ENCODE measurements at regions of chr5 and their contacts with region 1.

Region 1: DNA sequence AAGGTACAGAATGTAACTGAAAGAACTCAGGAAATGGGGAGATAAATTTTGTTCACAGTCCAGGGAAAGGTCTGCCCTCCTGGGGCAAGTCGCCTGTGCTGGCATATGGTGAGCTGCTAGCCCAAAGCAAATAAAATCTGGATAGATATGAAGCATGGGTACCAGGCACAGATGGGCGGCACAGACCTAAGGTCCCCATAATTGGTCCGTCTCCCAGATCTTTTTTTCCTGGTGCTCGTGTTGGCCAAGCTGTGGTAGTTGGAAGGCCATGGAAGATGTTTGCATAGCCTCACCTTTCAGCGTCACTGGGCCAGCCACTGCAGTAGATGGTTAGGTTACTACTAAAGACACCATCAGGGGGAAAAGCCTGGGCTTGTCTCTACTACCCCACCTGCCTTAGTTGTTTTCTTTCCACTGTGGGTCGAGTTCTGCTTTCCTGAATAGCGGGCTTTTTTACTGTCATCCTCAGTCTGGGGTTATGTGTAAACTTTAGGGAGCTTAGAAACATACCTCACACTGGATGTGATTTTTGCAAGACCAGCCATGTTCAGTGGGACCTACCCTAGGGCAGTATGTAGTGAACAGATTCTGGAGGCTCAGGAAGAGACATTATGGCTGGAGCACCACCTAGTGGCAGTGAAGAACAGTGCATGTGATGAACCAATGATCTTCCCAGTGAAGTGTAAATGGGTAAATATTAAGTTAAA is 24.2 kb upstream of the GLRX start:
- DNase-seq: peak; percentile 90
- H3K4me3 Mint-ChIP-seq: no peak overlapping the region
- H3K27ac Mint-ChIP-seq: no peak overlapping the region
- H3K4me1 Mint-ChIP-seq: peaks cover 27% of the 10 kb centered on the region
- H3K27me3 Mint-ChIP-seq: peaks cover 16% of the 10 kb centered on the region

Region 2: DNA sequence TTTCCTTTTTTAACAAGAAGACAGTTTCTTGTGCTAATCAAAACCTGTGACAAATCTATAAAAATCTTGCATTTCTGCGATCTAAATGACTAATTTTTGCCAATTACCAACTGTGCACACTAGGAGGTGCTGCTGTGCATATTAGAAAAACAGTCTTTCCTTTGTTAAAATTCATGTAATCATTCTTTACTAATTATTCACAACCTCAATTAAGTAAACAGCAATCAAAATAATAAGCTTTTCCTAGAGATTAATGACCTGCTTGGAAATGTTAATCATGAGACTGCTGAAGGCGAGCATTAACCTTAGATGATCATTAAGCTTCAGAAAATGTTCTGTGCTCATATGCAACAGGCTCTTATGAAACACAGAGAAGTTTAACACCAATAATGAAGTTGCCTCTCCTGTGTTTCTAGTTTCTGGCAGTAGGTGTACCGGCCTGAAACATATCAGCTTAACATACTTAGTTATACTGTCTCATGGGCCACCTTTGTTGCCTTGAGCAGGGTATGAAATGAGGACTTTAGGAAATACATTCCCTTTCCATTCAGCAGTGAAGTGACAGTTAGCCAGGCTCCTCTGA is 182.4 kb before region 1 on chr5:
- intact Hi-C with region 1: loop called (anchors 1 kb)
- DNase-seq: peak; percentile 78
- H3K4me3 Mint-ChIP-seq: no peak overlapping the region
- H3K27ac Mint-ChIP-seq: no peak overlapping the region
- H3K4me1 Mint-ChIP-seq: peaks cover 2% of the 10 kb centered on the region
- H3K27me3 Mint-ChIP-seq: peaks cover 13% of the 10 kb centered on the region

Region 3: DNA sequence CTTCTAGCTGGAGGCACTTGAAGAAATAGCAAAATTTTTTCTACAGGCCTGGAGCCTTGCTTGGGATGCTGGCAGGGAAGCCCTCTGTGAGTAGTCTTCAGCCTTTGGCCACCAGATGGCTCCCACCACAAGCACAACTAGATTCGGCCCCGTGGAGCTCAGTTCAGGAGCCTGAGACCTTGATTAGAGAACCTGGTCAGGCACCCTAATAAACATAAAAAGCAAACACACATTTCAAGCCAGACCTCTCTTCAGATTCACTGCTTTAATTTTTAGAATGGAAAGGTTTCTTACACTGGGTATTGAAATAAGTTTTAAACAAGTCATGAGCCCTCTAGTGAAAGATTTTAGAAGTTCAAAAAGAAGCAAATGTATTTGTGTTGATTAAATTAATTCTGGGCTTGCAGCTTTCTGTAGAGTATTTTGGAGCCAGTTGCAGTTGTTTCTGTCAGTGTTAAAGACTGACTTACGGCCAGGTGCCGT is 65.6 kb before region 1 on chr5:
- intact Hi-C with region 1: loop called (anchors 1 kb)
- DNase-seq: peak; percentile 90
- H3K4me3 Mint-ChIP-seq: peak overlapping the region; percentile 56
- H3K27ac Mint-ChIP-seq: no peak overlapping the region
- H3K4me1 Mint-ChIP-seq: peaks cover 16% of the 10 kb centered on the region
- H3K27me3 Mint-ChIP-seq: peaks cover 7% of the 10 kb centered on the region

Region 4: GRCh38 chr5:95835682-95836385 is 10.9 kb before region 1 on chr5:
- intact Hi-C with region 1: loop called (anchors 1 kb)
- DNase-seq: no peak
- H3K4me3 Mint-ChIP-seq: peak overlapping the region; percentile 78
- H3K27ac Mint-ChIP-seq: peak overlapping the region; percentile 74
- H3K4me1 Mint-ChIP-seq: peaks cover 31% of the 10 kb centered on the region
- H3K27me3 Mint-ChIP-seq: no peaks in the 10 kb centered on the region